HAP-1 (cell line): ENCODE measurements at regions of chr5 and their contacts with region 1.

Region 1: GRCh38 chr5:55936100-55936693 is 58.6 kb downstream of the IL6ST start:
- DNase-seq: peak; percentile 36 to 87
- H3K4me3 ChIP-seq: no peak overlapping the region
- H3K4me1 ChIP-seq: no peaks in the 10 kb centered on the region
- H3K27me3 ChIP-seq: no peaks in the 10 kb centered on the region

Region 2: GRCh38 chr5:56200856-56201666 is 264.9 kb after region 1 on chr5:
- in situ Hi-C with region 1: loop called (anchors 10 kb)
- DNase-seq: peak; percentile 47 to 68
- H3K4me3 ChIP-seq: no peak overlapping the region
- H3K4me1 ChIP-seq: no peaks in the 10 kb centered on the region
- H3K27me3 ChIP-seq: no peaks in the 10 kb centered on the region

Region 3: GRCh38 chr5:56710826-56711590 is 774.8 kb after region 1 on chr5:
- in situ Hi-C with region 1: no loop called
- DNase-seq: no peak
- H3K4me3 ChIP-seq: no peak overlapping the region
- H3K4me1 ChIP-seq: no peaks in the 10 kb centered on the region
- H3K27me3 ChIP-seq: 0 out of 2 replicates have a peak, but pooled peaks cover 3% of the 10 kb centered on the region

Region 4: DNA sequence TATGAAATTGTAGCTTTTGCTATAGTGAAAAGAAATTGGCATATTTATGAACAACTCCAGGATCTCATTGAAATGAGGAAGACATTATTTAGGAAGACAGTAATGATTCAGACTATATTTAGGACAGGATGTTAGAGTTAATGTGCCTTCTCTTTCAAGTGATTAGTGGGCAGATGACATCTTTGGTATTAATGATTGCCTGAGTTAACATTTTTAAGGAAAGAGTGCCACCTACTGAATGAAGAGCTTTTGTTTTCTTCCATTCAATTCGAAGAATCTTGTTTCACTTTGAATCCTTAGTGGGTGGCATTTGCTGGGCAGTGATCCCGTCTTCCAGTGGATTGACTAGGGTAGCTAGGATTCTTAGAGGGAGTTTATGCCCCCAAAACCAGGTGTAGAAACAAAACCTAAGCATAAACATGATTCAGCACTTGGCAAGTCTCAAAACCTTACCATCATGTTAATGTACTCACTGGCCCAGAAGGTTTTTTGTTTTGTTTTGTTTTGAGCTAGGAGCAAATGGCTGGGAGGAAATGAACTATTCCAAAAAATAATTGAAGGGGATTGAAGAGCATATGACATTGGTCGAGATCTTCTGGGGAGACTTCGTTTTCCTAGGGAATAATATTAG is 902.3 kb after region 1 on chr5:
- in situ Hi-C with region 1: loop called (anchors 25 kb)
- DNase-seq: peak in 1 of 2 experiments; percentile 52
- H3K4me3 ChIP-seq: no peak overlapping the region
- H3K4me1 ChIP-seq: peaks cover 14% of the 10 kb centered on the region
- H3K27me3 ChIP-seq: no peaks in the 10 kb centered on the region